BJ (cell line): ENCODE measurements at regions of chr19 and their contacts with region 1.

Region 1: GRCh38 chr19:15091901-15092753 is 10.1 kb downstream of the OR1I1 start:
- DNase-seq: no peak
- H3K4me3 ChIP-seq: no peak overlapping the region
- H3K27me3 ChIP-seq: no peaks in the 10 kb centered on the region
- CTCF ChIP-seq: peak; percentile 60

Region 2: DNA sequence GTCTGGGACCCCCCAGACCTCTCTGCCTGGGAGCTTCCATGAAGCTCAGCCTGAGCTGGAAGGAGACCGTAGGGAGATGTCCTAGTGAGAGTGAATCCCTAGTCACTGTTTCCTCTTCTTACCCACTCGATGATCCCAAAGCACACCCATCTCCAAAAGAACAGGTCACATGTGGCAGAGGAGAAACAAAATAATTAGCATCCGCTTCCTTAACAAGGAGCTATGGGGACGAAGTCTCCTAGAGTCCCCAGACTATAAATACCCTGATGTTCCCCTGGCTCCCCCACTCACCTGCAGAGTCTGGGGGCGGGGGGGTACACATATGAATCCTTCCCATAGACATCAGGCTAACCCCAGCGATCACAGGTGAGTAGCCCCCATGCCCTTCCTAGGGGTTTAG is 10.2 kb before region 1 on chr19 and contains the start of gene OR1I1:
- CTCF ChIA-PET with region 1: interaction called, 13 read pairs
- POLR2A ChIA-PET with region 1: no interaction called
- DNase-seq: no peak
- H3K4me3 ChIP-seq: no peak within 1 kb of the TSS
- H3K27me3 ChIP-seq: no peaks in the 10 kb centered on the region
- CTCF ChIP-seq: no peak
- polyA plus RNA-seq, gene OR1I1: not detected in 2 replicates

Region 3: GRCh38 chr19:15213715-15214381 is 121.7 kb after region 1 on chr19:
- CTCF ChIA-PET with region 1: no interaction called
- POLR2A ChIA-PET with region 1: no interaction called
- DNase-seq: no peak
- H3K4me3 ChIP-seq: no peak overlapping the region
- H3K27me3 ChIP-seq: no peaks in the 10 kb centered on the region
- CTCF ChIP-seq: no peak

Region 4: GRCh38 chr19:15555759-15556633 is 463.9 kb after region 1 on chr19:
- CTCF ChIA-PET with region 1: interaction called, 15 read pairs
- POLR2A ChIA-PET with region 1: no interaction called
- DNase-seq: peak; percentile 14
- H3K4me3 ChIP-seq: peak overlapping the region; percentile 5; the same call in 1 of the 2 replicates
- H3K27me3 ChIP-seq: peaks cover 2% of the 10 kb centered on the region
- CTCF ChIP-seq: peak; percentile 79